HEK293 (cell line): ENCODE measurements at regions of chr6 and their contacts with region 1.

Region 1: GRCh38 chr6:53492860-53493634 is 51.9 kb downstream of the GCLC start:
- H3K4me3 ChIP-seq: peak overlapping the region; percentile 12; the same call in 1 of the 2 replicates
- H3K27ac ChIP-seq: no peak overlapping the region
- H3K4me1 ChIP-seq: peaks cover 2% of the 10 kb centered on the region; the same call in 1 of the 2 replicates
- CTCF ChIP-seq: peak; percentile 30

Region 2: GRCh38 chr6:53504512-53504911 is 11.5 kb after region 1 on chr6:
- CTCF ChIA-PET with region 1: interaction called, 54 read pairs
- POLR2A ChIA-PET with region 1: no interaction called
- H3K4me3 ChIP-seq: no peak overlapping the region
- H3K27ac ChIP-seq: no peak overlapping the region
- H3K4me1 ChIP-seq: no peaks in the 10 kb centered on the region
- CTCF ChIP-seq: no peak

Region 3: DNA sequence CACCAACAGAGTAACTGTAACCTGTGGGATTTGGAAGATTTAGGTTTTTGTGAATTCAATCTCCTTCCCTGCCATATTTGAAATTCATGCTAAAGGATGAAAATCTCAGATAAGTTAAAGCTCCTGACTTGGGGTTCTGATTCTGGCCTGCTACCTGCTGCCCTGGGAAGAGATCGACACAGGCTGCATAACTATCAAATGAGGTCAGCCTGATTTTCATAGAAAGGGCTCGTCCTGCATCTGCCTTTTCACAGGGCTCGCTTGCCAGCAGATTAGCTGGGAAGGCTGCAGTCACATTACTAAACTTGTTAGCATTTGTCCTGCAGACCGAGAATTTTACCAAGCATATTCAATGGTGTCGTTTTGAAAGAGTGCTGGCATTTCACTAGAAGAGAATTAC is 37.3 kb after region 1 on chr6:
- CTCF ChIA-PET with region 1: interaction called, 25 read pairs
- POLR2A ChIA-PET with region 1: no interaction called
- H3K4me3 ChIP-seq: no peak overlapping the region
- H3K27ac ChIP-seq: no peak overlapping the region
- H3K4me1 ChIP-seq: peaks cover 43% of the 10 kb centered on the region
- CTCF ChIP-seq: no peak

Region 4: DNA sequence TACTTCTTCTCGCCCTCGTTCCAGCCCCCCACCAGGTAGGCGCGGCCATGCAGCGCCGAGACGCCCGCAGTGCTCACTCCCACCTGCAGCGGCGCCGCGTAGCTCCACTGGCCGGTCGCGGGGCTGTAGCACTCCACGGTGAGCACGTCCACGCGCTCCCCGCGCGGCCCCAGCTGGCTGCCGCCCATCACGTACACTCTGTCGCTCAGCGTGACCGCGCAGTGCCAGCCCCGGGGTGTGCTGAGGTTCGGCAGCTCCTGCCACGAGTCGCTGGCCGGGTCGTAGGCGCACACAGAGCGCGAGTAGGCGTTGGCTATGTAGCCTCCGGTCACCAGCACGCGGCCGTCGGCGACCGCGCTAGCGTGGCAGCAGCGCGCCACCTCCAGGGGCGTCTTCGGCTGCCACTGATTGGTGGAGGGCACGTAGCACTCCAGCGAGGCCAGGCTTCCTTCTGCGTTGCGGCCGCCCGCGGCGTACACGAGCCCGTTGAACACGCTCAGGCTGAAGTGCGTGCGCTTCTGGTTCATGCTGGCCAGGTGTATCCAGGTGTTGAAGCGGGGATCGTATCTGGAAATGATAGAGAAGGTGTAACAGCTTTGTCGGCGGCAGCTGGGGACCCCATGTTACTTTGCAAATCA is 158.8 kb after region 1 on chr6:
- CTCF ChIA-PET with region 1: interaction called, 135 read pairs
- POLR2A ChIA-PET with region 1: interaction called, 9 read pairs
- H3K4me3 ChIP-seq: peak overlapping the region; percentile 66
- H3K27ac ChIP-seq: peak overlapping the region; percentile 56
- H3K4me1 ChIP-seq: no peaks in the 10 kb centered on the region; the same call in 1 of the 2 replicates
- CTCF ChIP-seq: peak; percentile 99

Region 5: GRCh38 chr6:53718597-53719460 is 225.8 kb after region 1 on chr6:
- CTCF ChIA-PET with region 1: interaction called, 270 read pairs
- POLR2A ChIA-PET with region 1: interaction called, 3 read pairs
- H3K4me3 ChIP-seq: no peak overlapping the region
- H3K27ac ChIP-seq: no peak overlapping the region
- H3K4me1 ChIP-seq: peaks cover 2% of the 10 kb centered on the region; the same call in 1 of the 2 replicates
- CTCF ChIP-seq: 0 out of 2 replicates have a peak, but pooled peaks have one; percentile 40

Region 6: GRCh38 chr6:53956068-53956711 is 463.1 kb after region 1 on chr6:
- CTCF ChIA-PET with region 1: interaction called, 19 read pairs
- POLR2A ChIA-PET with region 1: no interaction called
- H3K4me3 ChIP-seq: no peak overlapping the region
- H3K27ac ChIP-seq: no peak overlapping the region
- H3K4me1 ChIP-seq: no peaks in the 10 kb centered on the region
- CTCF ChIP-seq: peak; percentile 85; the same call in 1 of the 2 replicates